ENCODE measurements at regions of chr19 and their contacts with region 1.

Region 1: GRCh38 chr19:9309139-9309973 is at the start of gene ZNF699:
- DNase-seq: peak; percentile 98
- H3K4me3 Mint-ChIP-seq: peak within 1 kb of the TSS; percentile 87
- H3K27ac Mint-ChIP-seq: peak within 1 kb of the TSS; percentile 94
- H3K4me1 Mint-ChIP-seq: peaks cover 29% of the 10 kb centered on the region
- H3K27me3 Mint-ChIP-seq: peaks cover 3% of the 10 kb centered on the region
- total RNA-seq, gene ZNF699: 4.7 and 5.0 TPM in 2 replicates

Region 2: DNA sequence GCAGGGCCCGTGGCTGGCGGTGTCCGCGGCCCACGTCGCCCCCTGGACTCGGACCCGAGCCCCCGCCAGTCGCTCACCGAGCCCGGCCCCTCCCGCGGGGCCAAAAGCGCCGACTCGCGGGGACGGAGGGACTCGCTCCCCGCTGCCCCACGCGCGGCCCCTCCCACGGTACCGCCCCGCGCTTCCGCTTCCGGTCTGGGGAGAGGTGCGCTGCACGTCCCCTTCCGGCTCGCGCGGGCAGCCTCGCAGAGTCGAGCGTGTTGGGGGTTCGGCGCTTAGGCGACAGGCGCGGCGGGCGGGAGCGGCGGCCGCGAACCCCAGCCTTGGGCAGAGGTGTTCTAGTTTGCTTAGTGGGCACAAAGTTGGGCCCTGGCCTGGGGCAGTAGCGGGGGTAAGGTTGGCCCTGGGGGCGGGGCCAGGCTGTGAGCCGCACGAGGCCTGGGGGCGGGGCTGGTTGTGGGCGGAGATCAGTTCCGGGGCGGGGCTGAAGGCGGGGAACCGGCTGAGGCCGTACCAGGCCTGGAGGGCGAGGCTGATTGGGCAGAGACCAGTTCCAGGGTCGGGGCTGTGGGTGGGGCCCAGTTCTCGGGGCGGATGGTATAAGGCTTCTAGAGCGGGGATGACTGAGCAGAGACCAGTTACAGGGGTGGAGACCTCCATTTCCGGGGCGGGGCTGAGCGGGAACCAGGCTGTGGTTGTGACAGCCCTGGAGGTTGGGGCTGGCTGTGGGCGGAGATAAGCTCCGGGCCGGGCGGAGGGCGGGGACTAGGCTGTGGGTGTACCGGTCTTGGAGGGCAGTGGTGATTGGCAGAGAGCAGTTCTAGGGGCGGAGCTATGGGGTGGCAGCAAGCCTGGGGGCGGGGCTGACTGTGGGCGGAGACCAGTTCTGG is 477.0 kb before region 1 on chr19 and contains the starts of genes MBD3L1 and ZNF558:
- intact Hi-C with region 1: loop called (anchors 2 kb)
- DNase-seq: peak; percentile 98
- H3K4me3 Mint-ChIP-seq: peak within 1 kb of the TSS; percentile 84
- H3K27ac Mint-ChIP-seq: peak within 1 kb of the TSS; percentile 95
- H3K4me1 Mint-ChIP-seq: peaks cover 20% of the 10 kb centered on the region
- H3K27me3 Mint-ChIP-seq: no peaks in the 10 kb centered on the region
- total RNA-seq, gene MBD3L1: not detected in 2 replicates
- total RNA-seq, gene ZNF558: 18.7 and 23.2 TPM in 2 replicates

Region 3: GRCh38 chr19:9295411-9295849 is 13.9 kb before region 1 on chr19:
- intact Hi-C with region 1: no loop called
- DNase-seq: no peak
- H3K4me3 Mint-ChIP-seq: no peak overlapping the region
- H3K27ac Mint-ChIP-seq: no peak overlapping the region
- H3K4me1 Mint-ChIP-seq: no peaks in the 10 kb centered on the region
- H3K27me3 Mint-ChIP-seq: no peaks in the 10 kb centered on the region

Region 4: DNA sequence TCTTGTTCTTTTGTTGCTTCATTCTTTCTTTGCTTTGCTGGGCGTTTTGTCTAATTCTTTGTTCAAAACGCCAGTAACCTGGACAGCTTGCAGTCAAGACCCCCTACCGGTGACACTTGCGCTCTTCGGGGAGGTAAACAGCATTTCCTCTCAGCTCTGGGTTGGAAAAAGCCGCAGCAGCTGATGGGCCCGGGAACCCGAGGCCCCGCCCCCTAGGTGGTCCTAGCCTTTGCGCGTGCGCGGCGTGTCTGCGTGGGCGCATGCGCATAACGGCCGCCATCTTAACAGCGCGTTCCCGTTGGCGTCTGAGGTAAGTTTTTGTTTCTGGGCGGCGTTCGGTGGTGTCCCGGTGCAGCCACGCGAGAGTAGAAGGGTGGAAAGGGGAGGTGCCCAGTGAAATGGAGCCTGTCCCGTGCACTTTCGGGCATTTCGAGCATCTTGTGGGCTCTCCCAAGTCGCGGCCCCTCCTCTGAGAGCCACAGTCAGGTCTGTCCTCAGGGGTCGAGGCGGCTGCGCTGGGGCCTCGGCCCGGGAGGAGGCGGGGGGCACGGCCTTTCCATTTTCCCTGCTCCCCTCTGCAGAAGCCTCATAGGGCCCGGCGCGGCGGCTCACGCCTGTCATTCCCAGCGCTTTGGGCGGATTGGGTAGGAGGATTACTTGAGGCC is 14.7 kb after region 1 on chr19 and contains the start of gene ZNF559:
- intact Hi-C with region 1: loop called (anchors 1 kb)
- DNase-seq: peak; percentile 93
- H3K4me3 Mint-ChIP-seq: peak within 1 kb of the TSS; percentile 89
- H3K27ac Mint-ChIP-seq: peak within 1 kb of the TSS; percentile 92
- H3K4me1 Mint-ChIP-seq: peaks cover 25% of the 10 kb centered on the region
- H3K27me3 Mint-ChIP-seq: no peaks in the 10 kb centered on the region
- total RNA-seq, gene ZNF559: 5.0 and 6.4 TPM in 2 replicates

Region 5: DNA sequence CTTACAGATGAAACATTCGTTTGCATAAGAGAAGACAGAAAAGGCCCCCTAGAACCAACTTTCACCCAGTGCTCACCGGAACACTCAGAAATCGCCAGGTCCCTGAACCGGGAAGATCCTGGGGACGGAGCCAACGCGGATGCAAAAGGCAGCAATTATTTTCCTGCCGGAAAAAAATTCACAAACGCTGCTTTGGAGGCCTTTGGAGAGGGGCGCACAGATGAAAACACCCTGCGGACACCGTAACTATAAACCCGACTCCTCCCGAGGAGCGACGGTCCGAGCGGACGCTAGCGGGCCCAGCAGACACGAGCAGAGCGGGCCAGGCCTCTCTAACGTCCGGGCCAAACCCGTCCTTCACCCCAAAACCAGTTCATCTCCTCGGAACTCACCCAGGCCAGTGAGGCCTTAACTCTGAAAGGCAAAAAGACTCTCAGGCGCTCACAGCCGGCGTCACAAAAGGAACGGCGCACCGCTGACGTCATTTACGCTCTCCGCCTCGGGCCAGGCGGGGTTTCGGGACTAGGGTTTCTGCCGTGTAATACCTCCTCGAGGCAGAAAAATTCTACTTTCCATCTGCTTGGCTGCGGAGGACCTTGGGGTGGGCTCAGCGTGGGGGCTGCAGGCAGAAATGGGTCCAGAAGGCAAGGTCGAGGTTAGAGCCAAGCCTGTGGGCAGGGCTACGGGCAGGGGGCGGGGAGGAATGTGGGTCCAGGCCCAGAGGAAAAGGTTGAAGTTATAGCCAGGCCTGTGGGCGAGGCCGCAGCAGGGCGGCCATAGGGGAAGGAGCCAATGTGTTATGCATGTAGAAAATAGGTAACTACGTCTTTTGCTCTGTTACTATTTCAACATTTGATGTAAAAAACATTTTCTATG is 229.1 kb after region 1 on chr19 and contains the start of gene ZNF426:
- intact Hi-C with region 1: loop called (anchors 1 kb)
- DNase-seq: peak; percentile 76
- H3K4me3 Mint-ChIP-seq: peak within 1 kb of the TSS; percentile 97
- H3K27ac Mint-ChIP-seq: peak within 1 kb of the TSS; percentile 98
- H3K4me1 Mint-ChIP-seq: peaks cover 5% of the 10 kb centered on the region
- H3K27me3 Mint-ChIP-seq: no peaks in the 10 kb centered on the region
- total RNA-seq, gene ZNF426: 10.2 and 10.3 TPM in 2 replicates

Region 6: GRCh38 chr19:9621156-9622037 is 312.0 kb after region 1 on chr19 and contains the start of gene ZNF561:
- intact Hi-C with region 1: loop called (anchors 2 kb)
- DNase-seq: peak; percentile 80
- H3K4me3 Mint-ChIP-seq: peak within 1 kb of the TSS; percentile 100
- H3K27ac Mint-ChIP-seq: peak within 1 kb of the TSS; percentile 99
- H3K4me1 Mint-ChIP-seq: peaks cover 28% of the 10 kb centered on the region
- H3K27me3 Mint-ChIP-seq: no peaks in the 10 kb centered on the region
- total RNA-seq, gene ZNF561: 33.2 and 36.7 TPM in 2 replicates

Region 7: GRCh38 chr19:9818734-9819589 is 509.6 kb after region 1 on chr19 and contains the start of gene FBXL12:
- intact Hi-C with region 1: loop called (anchors 2 kb)
- DNase-seq: peak; percentile 100
- H3K4me3 Mint-ChIP-seq: peak within 1 kb of the TSS; percentile 90
- H3K27ac Mint-ChIP-seq: peak within 1 kb of the TSS; percentile 87
- H3K4me1 Mint-ChIP-seq: peaks cover 27% of the 10 kb centered on the region
- H3K27me3 Mint-ChIP-seq: no peaks in the 10 kb centered on the region
- total RNA-seq, gene FBXL12: 19.4 and 20.7 TPM in 2 replicates

Measured in activated T-helper 1 cell treated with anti-CD3 and anti-CD28 coated beads, Interleukin-12 subunit alpha, Interleukin-12 subunit beta, Interleukin-2, Interleukin-4 antibody, amounts not matched to agents 30 ng/mL and 10 ng/mL and 1 ng/mL, durations not matched to agents 14 hours and 24 hours and 36 hours (primary cell).